Posterior vena cava (tissue), 2 donors: ENCODE measurements at regions of chr12 and their contacts with region 1.

Region 1: DNA sequence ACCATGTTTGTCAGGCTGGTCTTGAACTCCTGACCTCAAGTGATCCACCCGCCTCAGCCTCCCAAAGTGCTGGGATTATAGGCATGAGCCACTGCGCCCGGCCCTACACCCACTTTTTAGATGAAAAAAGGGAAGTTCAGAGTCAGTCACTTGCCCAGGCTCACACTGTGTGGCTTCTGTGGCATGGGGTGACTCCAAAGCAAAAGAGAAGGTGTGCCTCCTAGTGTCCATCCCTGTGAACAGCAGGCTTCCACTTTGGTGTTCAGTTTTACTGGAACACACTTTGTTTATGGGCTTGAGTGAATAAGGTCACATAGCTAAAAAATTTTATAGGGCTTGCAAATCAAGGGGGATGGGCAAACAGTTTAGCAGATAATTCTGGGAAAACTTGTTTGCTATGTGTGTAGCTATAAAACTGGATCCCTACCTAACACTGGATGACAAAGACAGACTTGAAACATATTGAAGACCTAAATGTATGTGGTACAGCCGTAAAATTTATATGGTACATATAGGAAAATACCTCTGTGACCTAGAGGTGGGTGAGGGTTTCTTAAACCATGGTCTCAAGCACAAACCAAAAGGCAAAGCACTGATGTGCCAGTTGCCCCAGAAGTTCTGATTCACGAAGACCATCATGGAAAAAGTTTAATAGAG is 54.9 kb downstream of the EID3 start:
- DNase-seq: peak; percentile 88

Region 2: DNA sequence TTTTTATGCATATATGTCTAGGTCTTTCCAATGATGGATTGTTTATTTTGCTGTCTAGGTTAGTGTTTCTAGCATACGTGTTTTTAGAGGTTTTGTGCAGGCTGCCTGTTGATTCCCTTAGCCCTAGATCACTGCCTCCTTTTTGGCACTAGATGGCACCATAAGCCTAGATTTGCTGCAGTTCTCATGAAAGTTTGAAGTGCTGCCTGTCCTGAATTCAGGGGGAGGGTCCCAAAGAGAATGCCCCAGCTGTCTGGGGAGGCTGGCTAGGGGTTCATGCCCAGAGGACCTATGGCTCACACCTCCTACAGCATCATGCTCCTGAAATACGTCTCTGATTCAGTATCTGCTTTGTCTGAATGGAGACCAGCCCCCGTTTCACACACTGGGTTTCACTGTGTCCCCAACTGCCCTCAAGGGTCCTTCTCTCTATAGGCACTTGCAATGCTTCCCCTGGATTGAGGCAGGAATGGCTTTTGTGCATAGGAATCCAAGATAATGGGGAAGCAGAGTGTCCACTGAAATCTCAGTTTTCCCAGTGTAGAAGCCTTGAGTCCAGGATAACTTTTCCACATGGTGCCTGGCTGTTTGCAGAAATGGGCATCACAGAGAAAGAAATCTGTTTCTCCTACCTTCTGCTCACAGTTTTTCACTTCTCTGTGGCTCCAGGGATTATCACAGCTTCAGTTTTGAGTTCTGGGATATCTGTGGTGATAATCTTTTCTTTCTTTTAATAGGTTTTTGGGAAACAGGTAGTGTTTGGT is 157.1 kb before region 1 on chr12:
- intact Hi-C with region 1: loop called (anchors 5 to 10 kb)
- DNase-seq: no peak

Region 3: GRCh38 chr12:104286538-104287482 is 71.7 kb before region 1 on chr12:
- intact Hi-C with region 1: no loop called
- DNase-seq: peak; percentile 98

Region 4: DNA sequence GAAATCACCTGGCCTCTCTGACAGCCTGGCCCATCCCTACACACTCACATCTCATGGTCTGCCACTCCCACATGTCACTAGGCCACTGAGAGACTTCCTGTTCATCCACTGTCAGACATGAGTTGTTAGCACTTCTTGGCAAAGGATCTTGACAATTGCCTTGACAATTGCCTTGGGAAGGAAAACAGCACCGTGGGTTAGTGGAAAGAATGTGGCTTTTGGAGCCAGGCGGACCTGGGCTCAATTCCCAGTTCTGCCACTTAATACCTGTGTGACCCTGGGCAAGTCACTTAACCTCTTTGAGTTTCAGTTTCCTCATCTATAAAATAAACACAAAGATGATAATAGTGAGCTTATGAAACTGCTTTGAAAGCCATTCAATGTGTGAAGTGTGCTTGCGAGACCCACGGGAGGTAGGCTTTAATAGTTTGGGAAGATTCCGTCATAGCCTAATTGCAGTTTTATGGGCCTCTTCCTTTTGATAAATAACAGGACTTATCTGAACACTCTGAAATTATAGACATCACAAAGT is 1222.4 kb after region 1 on chr12:
- intact Hi-C with region 1: loop called in 1 of 2 experiments (anchors 10 kb)
- DNase-seq: no peak